ENCODE measurements at regions of chr4 and their contacts with region 1.

Region 1: GRCh38 chr4:138680989-138681604 is 334.5 kb upstream of the NOCT start:
- DNase-seq: peak; percentile 57
- ATAC-seq: peak; percentile 84
- H3K4me3 ChIP-seq: no peak overlapping the region
- H3K27ac ChIP-seq: no peak overlapping the region
- H3K4me1 ChIP-seq: no peaks in the 10 kb centered on the region
- H3K27me3 ChIP-seq: no peaks in the 10 kb centered on the region
- CTCF ChIP-seq: peak; percentile 72 to 96 (median 74); a peak in 5 of 6 replicates
- POLR2A ChIP-seq: no peak
- RAD21 ChIP-seq: peak; percentile 91

Region 2: DNA sequence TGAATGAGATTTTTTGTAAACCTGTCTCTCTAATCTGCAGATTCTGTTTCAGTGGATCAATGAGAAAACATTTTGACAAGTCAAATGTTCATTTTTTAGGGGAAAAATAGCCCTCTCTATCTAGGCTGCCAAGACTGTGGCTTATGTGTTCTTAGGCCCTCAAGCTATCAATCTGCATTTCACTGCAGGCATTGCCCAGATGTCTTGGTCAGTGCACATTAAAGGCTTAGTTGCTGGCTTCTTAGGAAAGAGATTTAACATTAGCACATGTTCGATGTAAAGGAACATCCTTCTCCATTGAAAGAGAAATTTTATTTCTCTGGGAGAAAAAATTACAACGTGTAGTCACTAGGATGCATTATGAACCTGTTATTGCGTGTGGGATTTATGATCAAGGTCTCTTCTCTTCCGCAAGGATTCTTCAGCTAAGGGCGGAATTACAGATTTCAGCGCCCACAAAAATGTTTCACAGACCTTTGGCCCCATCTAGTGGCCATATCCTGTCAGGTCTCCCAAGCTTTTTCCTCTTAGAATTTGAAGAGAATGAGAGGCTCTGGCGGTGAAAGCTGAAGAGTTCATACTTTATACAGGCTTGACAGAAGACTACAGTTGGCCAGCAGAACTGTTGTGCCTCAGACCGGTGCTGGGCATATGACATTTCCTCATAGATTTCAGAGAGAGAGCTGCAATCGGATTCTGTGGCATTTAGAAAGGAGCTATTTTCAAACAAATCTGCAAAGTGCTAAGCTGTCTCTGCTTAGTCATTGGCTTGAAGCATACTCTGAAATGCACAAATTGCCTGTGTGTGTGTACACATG is 189.8 kb after region 1 on chr4:
- CTCF ChIA-PET with region 1: interaction called, 13 read pairs
- POLR2A ChIA-PET with region 1: no interaction called
- RAD21 ChIA-PET with region 1: interaction called, 4 to 8 read pairs
- intact Hi-C with region 1: loop called (anchors 2 kb)
- DNase-seq: peak; percentile 65
- ATAC-seq: peak; percentile 82
- H3K4me3 ChIP-seq: no peak overlapping the region
- H3K27ac ChIP-seq: no peak overlapping the region
- H3K4me1 ChIP-seq: peaks cover 0 to 9% of the 10 kb centered on the region in 2 experiments; a peak in 1 of 4 replicates
- H3K27me3 ChIP-seq: peaks cover 6% of the 10 kb centered on the region; the same call in 1 of the 2 replicates
- CTCF ChIP-seq: peak; percentile 71 to 87 (median 81)
- POLR2A ChIP-seq: no peak
- RAD21 ChIP-seq: peak; percentile 94

Region 3: DNA sequence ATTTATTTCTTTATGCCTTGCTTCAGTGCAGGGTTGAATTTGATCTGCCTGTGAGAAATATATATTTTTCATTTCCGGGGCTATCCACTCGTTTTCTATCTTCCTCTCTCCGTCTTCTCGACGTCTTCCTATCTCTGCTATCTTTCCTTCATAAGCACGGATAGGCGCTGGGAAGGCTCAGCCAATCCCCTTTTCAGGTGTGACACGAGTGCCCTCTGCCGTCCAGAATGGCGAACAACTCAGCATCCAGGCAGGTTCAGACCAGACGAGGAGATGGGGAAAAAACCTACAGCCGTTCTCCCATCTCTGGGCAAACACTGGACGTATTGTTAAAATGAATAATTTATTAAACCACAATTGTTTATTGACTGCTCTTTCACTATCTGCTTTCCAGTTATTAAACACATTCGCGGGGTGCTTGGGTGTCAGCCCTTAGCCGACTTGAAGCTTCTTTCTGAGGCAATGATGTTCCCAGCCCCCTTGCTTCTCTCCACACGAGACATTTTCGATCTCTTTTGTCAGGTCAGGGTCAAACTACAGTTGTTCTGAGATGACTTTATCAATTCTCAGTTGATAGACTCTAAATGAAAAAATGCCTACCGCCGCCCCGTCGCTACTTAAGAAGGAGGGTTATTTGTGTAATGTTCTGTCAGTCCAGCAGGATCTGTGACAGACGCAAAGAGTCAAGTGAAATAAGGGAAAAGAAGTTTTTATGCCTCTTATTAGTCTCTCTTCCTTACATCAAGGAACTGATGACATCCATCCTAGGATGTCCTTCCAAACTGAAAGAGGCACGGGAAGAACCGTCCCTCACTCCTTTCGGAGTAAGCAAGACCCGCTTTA is 238.2 kb after region 1 on chr4:
- CTCF ChIA-PET with region 1: no interaction called
- POLR2A ChIA-PET with region 1: no interaction called
- RAD21 ChIA-PET with region 1: interaction called in 1 of 2 experiments, 4 read pairs
- intact Hi-C with region 1: loop called (anchors 1 kb)
- DNase-seq: peak; percentile 66
- ATAC-seq: peak; percentile 100
- H3K4me3 ChIP-seq: peak overlapping the region; percentile 18 to 28; a peak in 3 of 4 replicates
- H3K27ac ChIP-seq: no peak overlapping the region
- H3K4me1 ChIP-seq: peaks cover 2 to 9% of the 10 kb centered on the region in 2 experiments; a peak in 2 of 4 replicates
- H3K27me3 ChIP-seq: no peaks in the 10 kb centered on the region
- CTCF ChIP-seq: peak; percentile 61 to 78 (median 76)
- POLR2A ChIP-seq: no peak
- RAD21 ChIP-seq: peak; percentile 88